ENCODE measurements at regions of chr7 and their contacts with region 1.

Region 1: GRCh38 chr7:150962553-150963399 is 15.3 kb downstream of the KCNH2 start:
- DNase-seq: peak; percentile 81 to 92 (median 86)
- ATAC-seq: peak; percentile 79
- H3K4me3 ChIP-seq: no peak overlapping the region
- H3K27ac ChIP-seq: peak overlapping the region; percentile 99
- H3K4me1 ChIP-seq: peaks cover 77 to 80% of the 10 kb centered on the region in 2 experiments
- H3K27me3 ChIP-seq: no peaks in the 10 kb centered on the region
- CTCF ChIP-seq: peak; percentile 98 to 99 (median 98)
- EP300 ChIP-seq: 0 out of 2 replicates have a peak, but pooled peaks have one; percentile 4
- POLR2A ChIP-seq: no peak
- RAD21 ChIP-seq: peak; percentile 98

Region 2: GRCh38 chr7:150898475-150899011 is 64.2 kb before region 1 on chr7:
- CTCF ChIA-PET with region 1: interaction called, 3 read pairs
- POLR2A ChIA-PET with region 1: interaction called, 3 read pairs
- in situ Hi-C with region 1: no loop called
- intact Hi-C with region 1: loop called (anchors 1 kb)
- DNase-seq: peak; percentile 88 to 93 (median 92)
- ATAC-seq: peak; percentile 94
- H3K4me3 ChIP-seq: no peak overlapping the region
- H3K27ac ChIP-seq: no peak overlapping the region; the same call in 2 of the 3 replicates
- H3K4me1 ChIP-seq: peaks cover 17 to 36% of the 10 kb centered on the region in 2 experiments; a peak in 4 of 5 replicates
- H3K27me3 ChIP-seq: peaks cover 17 to 27% of the 10 kb centered on the region in 2 experiments; a peak in 4 of 5 replicates
- CTCF ChIP-seq: peak; percentile 97 to 100 (median 98)
- EP300 ChIP-seq: peak; percentile 17; the same call in 1 of the 2 replicates
- POLR2A ChIP-seq: no peak
- RAD21 ChIP-seq: peak; percentile 99

Region 3: DNA sequence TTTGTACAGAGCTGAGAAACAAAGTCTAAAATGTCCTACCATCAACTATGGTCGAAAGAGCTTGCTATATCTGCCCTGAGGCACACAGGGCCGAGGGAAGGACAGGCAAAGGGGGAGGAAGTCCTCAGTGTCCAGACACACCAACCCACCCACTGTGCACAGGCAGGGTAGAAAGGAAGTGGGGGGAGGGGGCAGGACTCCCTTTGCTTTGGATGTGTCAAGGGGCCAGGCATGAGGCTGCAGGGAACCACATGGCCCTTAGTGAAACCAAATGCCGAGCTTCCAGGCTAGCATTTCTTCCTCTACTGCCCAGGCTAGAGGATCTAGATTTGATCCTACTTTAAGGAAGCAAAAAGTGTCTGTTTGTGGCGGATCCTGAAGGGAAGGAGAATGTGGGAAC is 13.2 kb before region 1 on chr7:
- CTCF ChIA-PET with region 1: no interaction called
- POLR2A ChIA-PET with region 1: interaction called, 11 read pairs
- in situ Hi-C with region 1: no loop called
- intact Hi-C with region 1: no loop called
- DNase-seq: peak in 2 of 4 experiments; percentile 71 to 79
- ATAC-seq: peak; percentile 4
- H3K4me3 ChIP-seq: no peak overlapping the region
- H3K27ac ChIP-seq: peak overlapping the region; percentile 5; the same call in 2 of the 3 replicates
- H3K4me1 ChIP-seq: peaks cover 48 to 99% of the 10 kb centered on the region in 2 experiments
- H3K27me3 ChIP-seq: no peaks in the 10 kb centered on the region
- CTCF ChIP-seq: no peak
- EP300 ChIP-seq: no peak
- POLR2A ChIP-seq: no peak
- RAD21 ChIP-seq: no peak

Region 4: GRCh38 chr7:150978136-150978789 is 15.5 kb after region 1 on chr7 and contains the start of gene KCNH2:
- CTCF ChIA-PET with region 1: interaction called, 6 read pairs
- POLR2A ChIA-PET with region 1: interaction called, 10 read pairs
- in situ Hi-C with region 1: no loop called
- intact Hi-C with region 1: loop called (anchors 2 kb)
- DNase-seq: peak; percentile 84 to 99 (median 98)
- ATAC-seq: peak; percentile 33
- H3K4me3 ChIP-seq: peak within 1 kb of the TSS; percentile 45
- H3K27ac ChIP-seq: peak within 1 kb of the TSS; percentile 34
- H3K4me1 ChIP-seq: peaks cover 37 to 70% of the 10 kb centered on the region in 2 experiments
- H3K27me3 ChIP-seq: peaks cover 23 to 29% of the 10 kb centered on the region in 2 experiments
- CTCF ChIP-seq: no peak
- EP300 ChIP-seq: no peak
- POLR2A ChIP-seq: no peak
- RAD21 ChIP-seq: no peak
- polyA plus RNA-seq, gene KCNH2: 18.1 to 29.0 TPM

Measured in K562 (cell line).